A673 (cell line): ENCODE measurements at regions of chr20 and their contacts with region 1.

Region 1: GRCh38 chr20:8389381-8390036 is 257.4 kb downstream of the PLCB1 start:
- DNase-seq: peak; percentile 75
- H3K4me3 ChIP-seq: no peak overlapping the region
- H3K27ac ChIP-seq: no peak overlapping the region
- H3K4me1 ChIP-seq: peaks cover 31% of the 10 kb centered on the region
- H3K27me3 ChIP-seq: no peaks in the 10 kb centered on the region
- CTCF ChIP-seq: peak; percentile 61

Region 2: GRCh38 chr20:8043687-8044282 is 345.7 kb before region 1 on chr20:
- CTCF ChIA-PET with region 1: no interaction called
- POLR2A ChIA-PET with region 1: no interaction called
- intact Hi-C with region 1: loop called (anchors 2 kb)
- DNase-seq: peak; percentile 56
- H3K4me3 ChIP-seq: no peak overlapping the region
- H3K27ac ChIP-seq: no peak overlapping the region
- H3K4me1 ChIP-seq: no peaks in the 10 kb centered on the region
- H3K27me3 ChIP-seq: peaks cover 9% of the 10 kb centered on the region
- CTCF ChIP-seq: peak; percentile 75

Region 3: DNA sequence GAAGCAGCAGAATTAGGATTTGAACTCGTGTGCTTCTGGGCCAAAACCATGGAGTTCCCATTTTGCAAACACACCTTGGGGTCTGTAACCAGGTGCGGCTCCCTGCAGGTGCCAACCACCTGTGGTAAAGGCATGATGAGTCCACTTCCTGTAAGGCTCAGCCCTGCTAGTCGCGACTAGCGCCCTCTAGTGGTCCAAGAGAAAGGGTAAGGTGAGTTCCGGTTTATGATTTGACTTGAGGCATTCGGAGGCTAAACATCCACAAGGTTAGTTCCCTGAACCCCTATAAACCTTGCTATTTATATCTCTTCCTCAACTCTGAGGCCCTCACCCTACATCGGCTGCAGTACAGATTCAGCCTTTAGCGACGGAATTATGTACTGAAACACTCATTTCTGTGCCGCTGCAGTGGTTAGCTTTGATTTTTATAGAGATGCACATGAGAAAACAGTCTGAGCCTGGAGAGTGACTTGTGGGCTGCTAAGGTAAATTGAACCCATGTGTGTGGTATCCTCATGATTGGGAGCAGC is 84.0 kb before region 1 on chr20:
- CTCF ChIA-PET with region 1: no interaction called
- POLR2A ChIA-PET with region 1: no interaction called
- intact Hi-C with region 1: loop called (anchors 5 kb)
- DNase-seq: peak; percentile 64
- H3K4me3 ChIP-seq: no peak overlapping the region
- H3K27ac ChIP-seq: no peak overlapping the region
- H3K4me1 ChIP-seq: peaks cover 24% of the 10 kb centered on the region
- H3K27me3 ChIP-seq: no peaks in the 10 kb centered on the region
- CTCF ChIP-seq: peak; percentile 89

Region 4: GRCh38 chr20:8404912-8405635 is 15.6 kb after region 1 on chr20:
- CTCF ChIA-PET with region 1: no interaction called
- POLR2A ChIA-PET with region 1: no interaction called
- intact Hi-C with region 1: no loop called
- DNase-seq: no peak
- H3K4me3 ChIP-seq: no peak overlapping the region
- H3K27ac ChIP-seq: no peak overlapping the region
- H3K4me1 ChIP-seq: peaks cover 5% of the 10 kb centered on the region
- H3K27me3 ChIP-seq: no peaks in the 10 kb centered on the region
- CTCF ChIP-seq: no peak

Region 5: DNA sequence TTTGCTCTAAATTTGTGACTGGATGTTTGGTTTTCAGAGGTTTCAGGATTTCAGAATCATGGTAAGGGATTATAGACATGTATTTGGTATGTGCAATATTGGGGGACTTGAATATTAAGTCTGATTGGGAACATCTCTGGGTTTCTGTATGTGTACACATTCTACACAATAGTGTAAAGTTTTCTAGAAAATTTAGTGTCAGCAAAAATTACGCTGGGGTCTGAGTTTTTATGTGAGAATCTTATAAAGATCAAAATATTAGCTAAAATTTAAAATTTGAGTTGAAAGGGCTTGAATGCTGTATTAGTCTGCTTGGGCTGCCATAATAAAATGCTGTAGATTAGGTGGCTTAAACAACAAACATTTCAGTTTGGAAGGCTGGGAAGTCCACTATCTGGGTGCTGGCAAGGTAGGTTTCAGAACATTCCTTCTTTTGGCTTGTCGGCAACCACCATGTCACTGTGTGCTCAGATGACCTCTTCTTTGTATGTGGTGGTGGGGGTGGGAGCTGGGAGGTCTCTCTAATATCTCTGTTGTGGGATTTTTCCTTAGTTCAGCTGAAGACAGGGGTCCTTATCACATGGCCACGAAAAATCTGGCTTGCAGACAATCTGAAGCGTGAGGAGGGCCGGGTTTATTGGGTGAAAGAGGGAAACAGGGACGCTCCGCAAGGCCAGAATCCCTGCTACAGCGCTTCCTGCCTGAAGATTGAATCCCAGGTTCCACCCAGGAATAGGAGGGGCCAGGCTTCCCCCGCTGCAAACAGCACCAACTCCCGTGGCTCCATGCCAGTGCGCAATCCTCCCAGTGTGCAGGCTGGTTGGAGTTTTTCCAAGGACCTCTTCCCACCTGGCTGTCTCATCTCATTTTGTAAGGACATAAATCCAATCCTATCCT is 42.3 kb after region 1 on chr20:
- CTCF ChIA-PET with region 1: no interaction called
- POLR2A ChIA-PET with region 1: no interaction called
- intact Hi-C with region 1: no loop called
- DNase-seq: no peak
- H3K4me3 ChIP-seq: no peak overlapping the region
- H3K27ac ChIP-seq: no peak overlapping the region
- H3K4me1 ChIP-seq: peaks cover 4% of the 10 kb centered on the region
- H3K27me3 ChIP-seq: no peaks in the 10 kb centered on the region
- CTCF ChIP-seq: no peak

Region 6: DNA sequence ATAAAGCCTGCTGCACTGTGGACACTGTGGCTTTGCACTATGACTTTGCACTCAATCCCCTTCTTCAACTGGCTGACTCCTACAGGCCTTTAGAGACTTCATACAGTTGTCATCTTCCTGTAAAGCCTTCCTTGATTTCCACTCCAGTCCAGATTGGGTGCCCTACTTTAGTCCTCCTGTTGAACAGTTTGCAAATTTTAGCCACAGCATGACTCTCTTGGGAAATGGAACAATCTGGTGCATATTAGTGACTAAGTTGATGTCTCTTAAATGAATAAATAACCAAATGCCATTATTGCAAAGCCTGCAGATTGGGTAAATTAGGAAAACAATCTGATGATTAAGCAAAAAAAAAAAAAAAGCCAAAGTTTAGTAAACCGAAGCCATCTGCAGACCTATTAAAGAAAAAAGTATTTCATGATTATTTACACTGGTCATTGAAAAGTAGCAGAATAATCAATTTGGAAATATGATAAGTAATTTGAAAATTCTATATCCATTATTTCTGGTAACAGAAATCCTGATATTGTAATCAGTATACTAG is 692.0 kb after region 1 on chr20:
- CTCF ChIA-PET with region 1: no interaction called
- POLR2A ChIA-PET with region 1: no interaction called
- intact Hi-C with region 1: no loop called
- DNase-seq: peak; percentile 11
- H3K4me3 ChIP-seq: no peak overlapping the region
- H3K27ac ChIP-seq: no peak overlapping the region
- H3K4me1 ChIP-seq: no peaks in the 10 kb centered on the region
- H3K27me3 ChIP-seq: no peaks in the 10 kb centered on the region
- CTCF ChIP-seq: no peak